WTC11 (cell line): ENCODE measurements at regions of chr12 and their contacts with region 1.

Region 1: DNA sequence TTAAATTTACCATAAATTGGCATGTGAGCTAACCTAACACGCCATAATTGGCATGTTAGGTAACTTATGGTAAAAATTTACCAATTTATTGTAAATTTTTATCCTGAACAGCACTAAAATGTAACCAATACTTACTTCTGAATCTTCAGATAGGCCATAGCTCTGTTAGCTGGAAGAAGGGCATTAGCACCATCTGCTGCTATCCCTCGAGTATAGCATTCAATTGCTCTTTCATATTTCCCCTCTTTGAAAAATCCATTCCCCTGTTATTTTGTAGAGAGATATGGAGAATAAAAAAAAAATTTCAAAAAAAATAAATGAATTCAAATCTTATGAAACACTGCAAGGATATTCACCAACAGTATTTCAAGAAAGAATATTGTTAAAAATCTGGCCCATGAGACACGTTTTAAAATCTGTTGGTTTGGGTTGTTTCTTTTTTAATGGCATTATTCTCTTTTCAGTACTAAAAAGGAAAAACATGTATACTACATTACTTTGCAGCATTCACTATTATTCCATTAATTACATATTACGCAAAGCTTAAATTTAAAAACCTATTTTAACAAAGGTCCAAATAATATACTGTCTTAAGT is 19.1 kb downstream of the RPAP3 start:
- DNase-seq: no peak
- ATAC-seq: no peak
- H3K4me3 Mint-ChIP-seq: no peak overlapping the region
- H3K27ac Mint-ChIP-seq: no peak overlapping the region
- H3K4me1 Mint-ChIP-seq: 0 out of 2 replicates have a peak, but pooled peaks cover 4% of the 10 kb centered on the region
- H3K27me3 Mint-ChIP-seq: no peaks in the 10 kb centered on the region
- CTCF ChIP-seq: 0 out of 2 replicates have a peak, but pooled peaks have one; percentile 22

Region 2: GRCh38 chr12:47534695-47535094 is 152.0 kb before region 1 on chr12:
- CTCF ChIA-PET with region 1: no interaction called
- POLR2A ChIA-PET with region 1: no interaction called
- DNase-seq: no peak
- ATAC-seq: no peak
- H3K4me3 Mint-ChIP-seq: no peak overlapping the region
- H3K27ac Mint-ChIP-seq: no peak overlapping the region
- H3K4me1 Mint-ChIP-seq: no peaks in the 10 kb centered on the region
- H3K27me3 Mint-ChIP-seq: peaks cover 10% of the 10 kb centered on the region
- CTCF ChIP-seq: no peak

Region 3: DNA sequence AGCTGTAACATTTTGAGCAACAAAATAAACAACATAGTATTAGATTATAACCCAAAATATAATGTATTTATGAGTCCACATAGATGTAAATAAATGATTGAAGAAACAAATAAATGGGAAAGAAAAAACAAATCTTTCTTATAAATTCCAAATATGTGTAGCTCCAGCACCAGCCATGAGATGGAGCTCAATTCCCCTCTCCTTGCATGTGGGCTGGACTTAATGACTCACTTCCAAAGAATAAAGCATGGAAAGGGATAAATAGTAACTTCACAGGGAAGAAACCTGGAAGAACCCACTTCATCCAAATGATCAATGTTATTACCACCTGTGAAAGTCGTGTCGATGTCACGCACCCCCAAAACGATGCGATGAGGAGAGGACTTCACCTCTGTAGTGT is 139.7 kb before region 1 on chr12:
- CTCF ChIA-PET with region 1: interaction called, 17 read pairs
- POLR2A ChIA-PET with region 1: no interaction called
- DNase-seq: no peak
- ATAC-seq: peak; percentile 69
- H3K4me3 Mint-ChIP-seq: no peak overlapping the region
- H3K27ac Mint-ChIP-seq: no peak overlapping the region
- H3K4me1 Mint-ChIP-seq: peaks cover 3% of the 10 kb centered on the region; the same call in 1 of the 2 replicates
- H3K27me3 Mint-ChIP-seq: no peaks in the 10 kb centered on the region
- CTCF ChIP-seq: no peak

Region 4: GRCh38 chr12:47570151-47570550 is 116.6 kb before region 1 on chr12:
- CTCF ChIA-PET with region 1: no interaction called
- POLR2A ChIA-PET with region 1: no interaction called
- DNase-seq: no peak
- ATAC-seq: no peak
- H3K4me3 Mint-ChIP-seq: no peak overlapping the region
- H3K27ac Mint-ChIP-seq: no peak overlapping the region
- H3K4me1 Mint-ChIP-seq: no peaks in the 10 kb centered on the region
- H3K27me3 Mint-ChIP-seq: no peaks in the 10 kb centered on the region; the same call in 1 of the 2 replicates
- CTCF ChIP-seq: no peak

Region 5: DNA sequence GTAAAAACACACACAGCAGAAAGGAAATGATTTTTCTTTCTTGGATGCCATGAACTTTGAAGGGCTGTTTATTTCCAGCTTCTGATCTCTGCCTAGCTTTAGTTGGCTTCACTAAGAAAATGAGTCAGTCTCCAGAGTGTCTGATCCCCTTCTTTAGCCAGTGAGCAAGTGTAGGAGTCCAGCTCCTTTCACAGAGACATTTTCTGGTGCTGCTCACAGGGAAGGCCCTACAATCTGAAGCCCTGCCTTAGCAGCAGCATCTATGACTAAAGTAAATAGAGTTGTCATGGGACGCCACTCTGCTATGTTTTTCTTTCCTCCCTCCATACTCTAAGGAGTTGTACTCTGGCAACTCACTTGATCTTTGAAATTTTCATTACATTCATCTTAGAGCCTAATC is 84.4 kb before region 1 on chr12:
- CTCF ChIA-PET with region 1: no interaction called
- POLR2A ChIA-PET with region 1: no interaction called
- DNase-seq: no peak
- ATAC-seq: no peak
- H3K4me3 Mint-ChIP-seq: no peak overlapping the region
- H3K27ac Mint-ChIP-seq: no peak overlapping the region
- H3K4me1 Mint-ChIP-seq: 0 out of 2 replicates have a peak, but pooled peaks cover 3% of the 10 kb centered on the region
- H3K27me3 Mint-ChIP-seq: peaks cover 5% of the 10 kb centered on the region; the same call in 1 of the 2 replicates
- CTCF ChIP-seq: no peak

Region 6: DNA sequence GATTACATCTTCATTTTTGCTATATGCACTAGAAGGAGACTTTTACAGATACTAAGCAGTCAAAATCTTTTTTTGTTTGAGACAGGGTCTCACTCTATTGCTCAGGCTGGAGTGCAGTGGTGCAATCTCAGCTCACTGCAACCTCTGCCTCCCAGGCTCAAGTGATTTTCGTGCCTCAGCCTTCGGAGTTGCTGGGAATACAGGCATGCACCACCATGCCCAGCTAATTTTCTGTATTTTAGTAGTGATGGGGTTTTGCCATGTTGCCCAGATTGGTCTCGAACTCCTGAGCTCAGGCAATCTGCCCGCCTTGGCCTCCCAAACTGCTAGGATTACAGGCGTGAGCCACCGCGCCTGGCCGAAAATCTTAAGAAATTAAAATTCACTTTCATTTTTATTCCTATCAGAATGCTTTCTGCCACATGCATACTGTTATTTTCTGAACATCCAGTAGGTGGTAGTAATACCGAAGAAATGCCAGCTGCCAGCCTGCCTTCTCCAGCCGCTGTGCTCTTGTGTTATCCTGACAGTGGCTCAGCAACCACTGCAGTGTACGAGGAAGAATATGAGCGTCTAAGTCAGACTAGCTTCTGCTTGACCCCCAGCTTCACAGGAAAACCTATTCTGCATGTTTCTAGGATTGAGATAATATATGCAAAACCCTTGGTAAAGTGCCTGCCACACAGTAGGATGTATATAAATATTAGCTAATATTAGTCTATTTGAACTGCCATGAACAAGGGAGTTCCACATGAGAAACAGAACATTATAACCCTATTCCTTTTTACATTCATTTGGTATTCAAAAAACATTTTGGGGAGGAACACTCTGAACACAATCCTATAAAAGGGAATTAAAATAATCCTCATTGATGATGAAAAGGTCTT is 35.1 kb before region 1 on chr12:
- CTCF ChIA-PET with region 1: interaction called, 16 read pairs
- POLR2A ChIA-PET with region 1: no interaction called
- DNase-seq: peak; percentile 31
- ATAC-seq: peak; percentile 76
- H3K4me3 Mint-ChIP-seq: no peak overlapping the region
- H3K27ac Mint-ChIP-seq: no peak overlapping the region
- H3K4me1 Mint-ChIP-seq: peaks cover 14% of the 10 kb centered on the region
- H3K27me3 Mint-ChIP-seq: no peaks in the 10 kb centered on the region
- CTCF ChIP-seq: no peak; the same call in 1 of the 2 replicates

Region 7: GRCh38 chr12:47698055-47698454 is 11.3 kb after region 1 on chr12:
- CTCF ChIA-PET with region 1: no interaction called
- POLR2A ChIA-PET with region 1: no interaction called
- DNase-seq: no peak
- ATAC-seq: no peak
- H3K4me3 Mint-ChIP-seq: no peak overlapping the region
- H3K27ac Mint-ChIP-seq: no peak overlapping the region
- H3K4me1 Mint-ChIP-seq: no peaks in the 10 kb centered on the region
- H3K27me3 Mint-ChIP-seq: no peaks in the 10 kb centered on the region
- CTCF ChIP-seq: no peak